ENCODE measurements at regions of chr17 and their contacts with region 1.

Region 1: GRCh38 chr17:50139950-50140871 is 10.3 kb upstream of the SAMD14 start:
- DNase-seq: peak; percentile 67 to 90 (median 78)
- ATAC-seq: peak; percentile 88 to 90
- H3K4me3 Mint-ChIP-seq: peak overlapping the region; percentile 55 to 86 (median 76)
- H3K27ac Mint-ChIP-seq: peak overlapping the region; percentile 84 to 95 (median 90)
- H3K4me1 Mint-ChIP-seq: peaks cover 58 to 68% (median 63%) of the 10 kb centered on the region in 4 donors
- H3K27me3 Mint-ChIP-seq: no peaks in the 10 kb centered on the region

Region 2: GRCh38 chr17:50129728-50130558 is 10.3 kb before region 1 on chr17 and contains the start of gene SAMD14:
- POLR2A ChIA-PET with region 1: interaction called, 10 read pairs
- DNase-seq: peak in 7 of 10 donors; percentile 35 to 77 (median 48)
- ATAC-seq: peak; percentile 70 to 84
- H3K4me3 Mint-ChIP-seq: peak within 1 kb of the TSS; percentile 68 to 91 (median 80)
- H3K27ac Mint-ChIP-seq: peak within 1 kb of the TSS in 9 of 10 donors; percentile 41 to 96 (median 88)
- H3K4me1 Mint-ChIP-seq: peaks cover 19 to 39% (median 34%) of the 10 kb centered on the region in 4 donors
- H3K27me3 Mint-ChIP-seq: peaks cover 5 to 20% (median 13%) of the 10 kb centered on the region in 5 donors
- polyA plus RNA-seq, gene SAMD14: not detected

Region 3: DNA sequence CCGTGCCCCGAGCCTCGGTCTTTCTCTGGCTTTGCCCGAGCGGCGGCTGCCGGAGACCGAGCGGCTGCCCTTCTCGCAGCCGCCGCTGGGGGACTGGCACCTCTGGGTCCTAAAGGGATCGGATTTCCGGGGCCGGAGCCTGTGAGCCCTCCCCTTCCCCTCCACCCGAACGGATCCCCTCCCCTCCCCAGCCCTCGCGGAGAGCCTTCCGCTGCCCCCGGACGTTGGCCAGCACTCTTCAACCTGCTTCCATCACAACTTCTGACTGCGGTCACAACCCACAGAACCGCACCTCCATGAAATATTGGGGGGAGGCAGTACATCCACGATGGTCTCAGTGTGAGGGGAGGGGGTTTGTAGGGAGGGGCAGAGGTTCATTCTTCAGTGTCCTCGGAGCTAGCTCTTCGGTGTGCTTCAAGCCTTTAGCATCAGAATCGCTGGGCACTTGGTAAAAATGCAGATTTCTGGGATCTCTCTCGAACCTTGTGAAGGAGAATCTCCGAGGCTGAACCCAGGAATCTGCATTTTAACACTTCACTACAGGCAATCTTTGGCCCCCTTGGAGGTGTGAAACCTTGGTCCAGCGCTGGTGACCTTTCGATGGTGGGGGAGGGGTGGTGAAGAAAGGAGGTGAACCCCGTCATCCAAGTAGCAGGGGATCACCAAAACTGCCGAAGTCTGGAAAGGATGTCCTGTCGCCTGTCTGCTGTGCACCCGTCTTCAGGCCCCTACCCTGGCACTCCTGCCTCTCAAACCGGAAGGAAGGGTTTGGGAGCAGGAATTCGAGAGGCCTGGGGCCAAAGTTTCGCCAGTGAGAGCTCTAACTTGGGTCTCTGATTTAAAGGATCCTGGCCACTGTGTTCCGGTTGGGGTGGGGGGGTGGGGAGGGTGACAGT is 11.1 kb after region 1 on chr17:
- POLR2A ChIA-PET with region 1: interaction called, 90 read pairs
- DNase-seq: peak; percentile 69 to 89 (median 79)
- ATAC-seq: peak; percentile 66 to 72
- H3K4me3 Mint-ChIP-seq: peak overlapping the region; percentile 81 to 93 (median 88)
- H3K27ac Mint-ChIP-seq: peak overlapping the region; percentile 66 to 95 (median 91)
- H3K4me1 Mint-ChIP-seq: peaks cover 15 to 60% (median 54%) of the 10 kb centered on the region in 4 donors
- H3K27me3 Mint-ChIP-seq: no peaks in the 10 kb centered on the region

Region 4: DNA sequence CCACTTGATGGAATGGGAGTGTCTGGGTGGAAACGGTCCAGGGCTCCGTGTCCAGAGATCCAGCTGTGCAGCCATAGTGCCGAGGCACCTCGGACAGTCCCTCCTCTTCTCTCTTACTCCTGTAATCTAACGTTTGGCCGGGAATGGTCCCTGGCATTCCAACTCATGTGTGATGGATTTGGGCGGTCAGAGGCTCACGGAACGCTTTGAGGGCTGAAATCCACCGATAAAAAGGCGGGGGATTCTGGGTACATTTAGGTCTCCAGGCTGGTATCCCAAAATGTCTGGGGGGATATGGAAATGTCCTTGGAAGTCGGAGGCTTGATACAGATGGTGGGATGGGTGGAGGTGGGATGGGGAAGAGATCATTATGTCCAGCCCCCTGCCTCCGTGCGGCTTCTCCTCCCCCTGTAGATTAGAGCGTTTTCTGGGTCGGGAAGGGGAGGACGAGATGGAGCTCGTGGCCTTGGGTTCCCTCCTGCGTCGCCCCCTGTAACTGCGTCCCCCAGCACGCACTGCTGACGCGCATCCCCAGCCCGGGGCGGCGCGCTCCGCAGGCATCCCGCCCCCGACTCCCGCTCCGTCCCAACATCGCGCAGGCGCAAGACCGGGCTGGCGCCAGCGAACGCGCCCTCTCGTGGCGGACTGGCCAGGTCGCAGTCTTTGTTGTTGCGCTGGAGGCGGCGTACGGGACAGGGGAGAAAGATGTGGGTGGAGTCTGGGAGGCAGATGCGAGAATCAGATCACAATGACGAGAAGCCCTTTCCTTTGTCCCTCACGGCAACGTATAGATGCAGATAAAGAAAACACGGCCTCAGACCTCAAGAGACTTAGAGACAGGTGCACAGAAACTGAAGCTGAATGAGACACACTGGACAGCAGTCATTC is 21.1 kb after region 1 on chr17:
- POLR2A ChIA-PET with region 1: interaction called, 32 read pairs
- DNase-seq: peak; percentile 92 to 99 (median 96)
- ATAC-seq: peak; percentile 88 to 96
- H3K4me3 Mint-ChIP-seq: peak overlapping the region; percentile 66 to 94 (median 82)
- H3K27ac Mint-ChIP-seq: peak overlapping the region; percentile 86 to 98 (median 97)
- H3K4me1 Mint-ChIP-seq: peaks cover 22 to 50% (median 48%) of the 10 kb centered on the region in 4 donors
- H3K27me3 Mint-ChIP-seq: no peaks in the 10 kb centered on the region